ENCODE measurements at regions of chr12 and their contacts with region 1.

Region 1: GRCh38 chr12:57124259-57124877 is 3.9 kb upstream of the LRP1 start:
- DNase-seq: peak; percentile 62
- H3K4me3 Mint-ChIP-seq: no peak overlapping the region
- H3K27ac Mint-ChIP-seq: no peak overlapping the region
- H3K4me1 Mint-ChIP-seq: peaks cover 17% of the 10 kb centered on the region
- H3K27me3 Mint-ChIP-seq: peaks cover 36% of the 10 kb centered on the region

Region 2: DNA sequence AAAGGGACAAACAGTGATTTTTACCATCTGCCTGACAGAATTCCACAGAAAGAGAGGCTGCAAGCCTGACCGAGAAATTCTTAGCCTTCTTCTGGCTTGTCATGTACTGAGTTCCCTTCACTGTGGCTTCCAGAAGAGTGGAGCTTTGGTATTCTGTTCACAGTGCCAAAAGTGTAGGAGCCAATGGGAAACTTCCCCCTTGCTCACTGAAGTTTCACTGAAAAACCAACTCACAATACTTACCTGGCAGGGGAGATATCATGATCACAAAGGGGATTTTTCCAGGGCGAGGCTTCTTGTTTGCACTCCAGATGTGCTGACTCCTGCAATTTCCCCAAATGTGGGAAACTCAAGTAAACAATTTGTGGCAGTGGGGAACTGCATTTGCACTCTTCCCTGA is 1249.9 kb before region 1 on chr12:
- intact Hi-C with region 1: no loop called
- DNase-seq: no peak
- H3K4me3 Mint-ChIP-seq: no peak overlapping the region
- H3K27ac Mint-ChIP-seq: no peak overlapping the region
- H3K4me1 Mint-ChIP-seq: no peaks in the 10 kb centered on the region
- H3K27me3 Mint-ChIP-seq: peaks cover 3% of the 10 kb centered on the region

Region 3: GRCh38 chr12:57069523-57069922 is 54.8 kb before region 1 on chr12:
- intact Hi-C with region 1: loop called (anchors 2 kb)
- DNase-seq: peak; percentile 50
- H3K4me3 Mint-ChIP-seq: peak overlapping the region; percentile 23
- H3K27ac Mint-ChIP-seq: peak overlapping the region; percentile 92
- H3K4me1 Mint-ChIP-seq: peaks cover 58% of the 10 kb centered on the region
- H3K27me3 Mint-ChIP-seq: no peaks in the 10 kb centered on the region

Region 4: GRCh38 chr12:57173089-57173488 is 48.7 kb after region 1 on chr12:
- intact Hi-C with region 1: loop called (anchors 2 kb)
- DNase-seq: no peak
- H3K4me3 Mint-ChIP-seq: no peak overlapping the region
- H3K27ac Mint-ChIP-seq: peak overlapping the region; percentile 26
- H3K4me1 Mint-ChIP-seq: no peaks in the 10 kb centered on the region
- H3K27me3 Mint-ChIP-seq: peaks cover 6% of the 10 kb centered on the region

Region 5: GRCh38 chr12:57182921-57183790 is 58.8 kb after region 1 on chr12:
- intact Hi-C with region 1: loop called (anchors 1 kb)
- DNase-seq: peak; percentile 65
- H3K4me3 Mint-ChIP-seq: no peak overlapping the region
- H3K27ac Mint-ChIP-seq: peak overlapping the region; percentile 34
- H3K4me1 Mint-ChIP-seq: peaks cover 6% of the 10 kb centered on the region
- H3K27me3 Mint-ChIP-seq: peaks cover 6% of the 10 kb centered on the region

Region 6: DNA sequence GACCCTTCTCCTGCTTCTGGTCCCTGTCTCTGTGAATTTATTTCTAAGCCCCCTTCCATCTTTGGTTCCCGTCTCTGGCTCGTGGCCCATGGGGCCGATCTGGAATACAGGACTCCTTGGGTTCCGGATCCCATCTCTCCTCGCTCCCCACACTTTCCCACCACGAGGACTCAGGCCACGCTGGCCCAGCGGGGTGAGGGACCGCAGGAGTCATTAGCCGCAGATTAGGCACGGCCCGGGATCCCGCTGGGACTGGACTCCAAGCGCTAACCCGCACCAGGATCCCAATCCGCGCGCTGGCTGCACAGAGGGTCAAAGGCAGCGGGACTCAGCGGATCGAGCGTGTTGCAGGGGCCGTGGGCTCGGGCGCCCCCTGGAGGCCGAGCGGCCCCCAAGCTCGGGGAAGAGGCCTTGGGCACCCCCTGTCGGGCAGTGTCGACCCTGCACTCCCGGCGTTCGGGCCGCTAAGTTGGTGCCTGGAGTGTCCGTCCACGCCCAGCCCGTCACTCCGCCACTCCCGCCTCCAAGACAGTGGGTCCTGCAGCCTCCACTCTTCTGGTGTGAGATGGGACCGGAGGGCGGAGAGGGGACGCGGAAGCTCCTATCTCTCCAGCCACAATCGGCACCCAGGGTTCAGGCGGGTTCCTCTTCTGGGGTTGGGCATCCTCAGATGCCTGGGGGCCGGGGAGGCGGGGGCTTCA is 114.6 kb after region 1 on chr12:
- intact Hi-C with region 1: loop called (anchors 2 kb)
- DNase-seq: peak; percentile 86
- H3K4me3 Mint-ChIP-seq: peak overlapping the region; percentile 95
- H3K27ac Mint-ChIP-seq: peak overlapping the region; percentile 78
- H3K4me1 Mint-ChIP-seq: peaks cover 64% of the 10 kb centered on the region
- H3K27me3 Mint-ChIP-seq: peaks cover 48% of the 10 kb centered on the region